Psoas muscle (tissue), 8 donors: ENCODE measurements at regions of chrX and their contacts with region 1.

Region 1: DNA sequence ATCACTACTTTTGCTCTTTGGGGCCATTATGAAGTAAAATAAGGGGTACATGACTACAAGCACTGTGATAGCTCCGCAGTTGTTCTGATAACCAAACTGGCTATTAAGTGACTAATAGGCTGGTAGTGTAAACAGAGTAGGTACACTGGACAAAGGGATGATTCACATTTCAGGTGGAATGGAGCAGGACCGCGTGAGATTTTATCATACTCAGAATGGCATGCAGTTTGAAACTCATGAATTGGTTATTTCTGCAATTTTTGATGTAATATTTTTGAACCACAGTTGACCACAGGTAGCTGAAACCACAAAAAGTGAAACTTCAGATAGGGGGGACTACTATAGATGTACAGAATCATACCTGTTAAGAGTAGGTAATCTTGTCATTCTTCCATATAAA is 55.8 kb downstream of the PAK3 start:
- DNase-seq: no peak
- ATAC-seq: no peak
- H3K4me3 ChIP-seq: no peak overlapping the region
- H3K27ac ChIP-seq: no peak overlapping the region
- H3K4me1 ChIP-seq: no peaks in the 10 kb centered on the region
- H3K27me3 ChIP-seq: peaks cover 0 to 28% (median 0%) of the 10 kb centered on the region in 3 donors
- CTCF ChIP-seq: no peak

Region 2: DNA sequence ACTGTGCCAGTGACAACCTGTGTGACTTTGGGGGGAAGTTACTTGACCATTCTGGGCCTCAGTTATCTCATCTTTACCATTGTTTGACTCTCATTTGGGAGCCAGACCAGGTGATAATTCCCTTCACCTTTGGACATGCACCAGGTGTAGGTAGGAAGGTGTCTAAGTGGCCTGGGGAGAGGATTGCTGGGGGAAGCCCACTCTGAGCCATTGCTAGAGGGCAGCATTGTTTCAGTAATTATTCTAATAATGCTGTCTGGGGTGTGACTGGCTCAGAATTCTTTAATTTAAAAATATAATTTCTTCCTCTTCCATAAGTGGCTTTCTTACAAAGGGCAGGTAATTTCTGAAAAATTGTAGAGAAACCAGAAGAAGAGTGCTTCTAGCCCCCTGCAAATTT is 688.8 kb before region 1 on chrX:
- intact Hi-C with region 1: loop called in 1 of 2 experiments (anchors 5 kb)
- DNase-seq: no peak
- ATAC-seq: no peak
- H3K4me3 ChIP-seq: no peak overlapping the region
- H3K27ac ChIP-seq: no peak overlapping the region
- H3K4me1 ChIP-seq: no peaks in the 10 kb centered on the region
- H3K27me3 ChIP-seq: peaks cover 0 to 24% (median 0%) of the 10 kb centered on the region in 3 donors
- CTCF ChIP-seq: no peak